Panc1 (cell line): ENCODE measurements at regions of chr2 and their contacts with region 1.

Region 1: GRCh38 chr2:215505044-215505786 is 69.3 kb upstream of the FN1 start:
- DNase-seq: no peak
- ATAC-seq: no peak
- H3K4me3 ChIP-seq: no peak overlapping the region
- H3K27ac ChIP-seq: no peak overlapping the region
- H3K4me1 ChIP-seq: no peaks in the 10 kb centered on the region
- H3K27me3 ChIP-seq: peaks cover 2% of the 10 kb centered on the region; the same call in 1 of the 2 replicates
- CTCF ChIP-seq: no peak

Region 2: GRCh38 chr2:215881582-215881981 is 376.4 kb after region 1 on chr2:
- CTCF ChIA-PET with region 1: interaction called, 17 read pairs
- POLR2A ChIA-PET with region 1: no interaction called
- in situ Hi-C with region 1: no loop called
- intact Hi-C with region 1: no loop called
- DNase-seq: no peak
- ATAC-seq: no peak
- H3K4me3 ChIP-seq: no peak overlapping the region
- H3K27ac ChIP-seq: no peak overlapping the region
- H3K4me1 ChIP-seq: no peaks in the 10 kb centered on the region
- H3K27me3 ChIP-seq: no peaks in the 10 kb centered on the region; the same call in 1 of the 2 replicates
- CTCF ChIP-seq: no peak